Activated T-helper 2 cell treated with anti-CD3 and anti-CD28 coated beads, Interferon-gamma antibody, Interleukin-2, Interleukin-4, amounts not matched to agents 10 μg/mL and 5 μg/mL and 100 μg/mL, durations not matched to agents 14 hours and 24 hours and 36 hours (primary cell): ENCODE measurements at regions of chr3 and their contacts with region 1.

Region 1: GRCh38 chr3:33440323-33441232 is at the start of gene UBP1:
- DNase-seq: peak; percentile 99
- H3K4me3 Mint-ChIP-seq: peak within 1 kb of the TSS; percentile 100
- H3K27ac Mint-ChIP-seq: peak within 1 kb of the TSS; percentile 100
- H3K4me1 Mint-ChIP-seq: peaks cover 37% of the 10 kb centered on the region
- H3K27me3 Mint-ChIP-seq: no peaks in the 10 kb centered on the region
- total RNA-seq, gene UBP1: 59.2 and 63.8 TPM in 2 replicates

Region 2: GRCh38 chr3:32684800-32685542 is 755.6 kb before region 1 on chr3 and contains the start of gene CNOT10:
- intact Hi-C with region 1: loop called (anchors 1 kb)
- DNase-seq: peak; percentile 97
- H3K4me3 Mint-ChIP-seq: peak within 1 kb of the TSS; percentile 87
- H3K27ac Mint-ChIP-seq: peak within 1 kb of the TSS; percentile 90
- H3K4me1 Mint-ChIP-seq: peaks cover 27% of the 10 kb centered on the region
- H3K27me3 Mint-ChIP-seq: peaks cover 3% of the 10 kb centered on the region
- total RNA-seq, gene CNOT10: 51.5 and 53.5 TPM in 2 replicates

Region 3: DNA sequence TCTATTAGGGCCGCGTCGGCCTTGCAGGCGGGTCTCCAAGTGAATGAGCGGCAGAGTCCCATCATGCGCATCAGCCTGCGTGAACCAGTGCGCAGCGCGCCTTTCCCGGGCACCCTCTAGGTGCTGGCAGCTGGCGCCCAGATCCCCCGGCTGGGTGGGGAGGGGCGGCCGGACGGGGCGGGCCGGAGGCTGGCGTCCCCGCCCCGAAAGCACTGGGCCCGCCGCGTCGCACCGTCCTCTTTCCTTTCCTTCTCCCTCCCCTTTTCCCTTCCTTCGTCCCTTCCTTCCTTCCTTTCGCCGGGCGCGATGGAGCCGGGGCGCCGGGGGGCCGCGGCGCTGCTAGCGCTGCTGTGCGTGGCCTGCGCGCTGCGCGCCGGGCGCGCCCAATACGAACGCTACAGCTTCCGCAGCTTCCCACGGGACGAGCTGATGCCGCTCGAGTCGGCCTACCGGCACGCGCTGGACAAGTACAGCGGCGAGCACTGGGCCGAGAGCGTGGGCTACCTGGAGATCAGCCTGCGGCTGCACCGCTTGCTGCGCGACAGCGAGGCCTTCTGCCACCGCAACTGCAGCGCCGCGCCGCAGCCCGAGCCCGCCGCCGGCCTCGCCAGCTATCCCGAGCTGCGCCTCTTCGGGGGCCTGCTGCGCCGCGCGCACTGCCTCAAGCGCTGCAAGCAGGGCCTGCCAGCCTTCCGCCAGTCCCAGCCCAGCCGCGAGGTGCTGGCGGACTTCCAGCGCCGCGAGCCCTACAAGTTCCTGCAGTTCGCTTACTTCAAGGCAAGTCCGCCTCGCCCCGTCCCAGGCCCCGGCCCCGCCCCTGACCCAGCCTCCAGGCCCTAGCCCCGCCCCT is 326.6 kb before region 1 on chr3 and contains the start of gene CRTAP:
- intact Hi-C with region 1: loop called (anchors 1 kb)
- DNase-seq: peak; percentile 79
- H3K4me3 Mint-ChIP-seq: peak within 1 kb of the TSS; percentile 82
- H3K27ac Mint-ChIP-seq: peak within 1 kb of the TSS; percentile 68
- H3K4me1 Mint-ChIP-seq: peaks cover 17% of the 10 kb centered on the region
- H3K27me3 Mint-ChIP-seq: no peaks in the 10 kb centered on the region
- total RNA-seq, gene CRTAP: 51.9 and 55.9 TPM in 2 replicates

Region 4: DNA sequence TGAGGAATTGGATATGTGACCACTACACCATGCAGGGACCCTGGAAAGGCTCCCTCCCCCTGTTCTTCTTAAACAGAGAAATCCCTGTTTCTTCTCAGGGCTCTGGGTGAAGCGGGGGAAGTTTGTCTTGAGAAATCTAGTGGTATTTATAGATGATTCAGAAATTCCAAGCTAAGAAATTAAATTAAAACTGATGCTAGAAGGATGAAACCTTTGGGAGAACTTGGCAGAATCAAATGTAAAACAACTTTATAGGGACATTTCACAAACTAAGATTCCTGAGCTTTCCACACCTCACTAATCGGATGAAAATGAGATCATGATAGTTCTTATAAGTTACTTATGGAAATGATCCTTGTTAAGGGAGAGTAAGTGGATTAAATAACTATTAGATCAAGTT is 109.2 kb before region 1 on chr3:
- intact Hi-C with region 1: no loop called
- DNase-seq: no peak
- H3K4me3 Mint-ChIP-seq: no peak overlapping the region
- H3K27ac Mint-ChIP-seq: no peak overlapping the region
- H3K4me1 Mint-ChIP-seq: no peaks in the 10 kb centered on the region
- H3K27me3 Mint-ChIP-seq: peaks cover 6% of the 10 kb centered on the region

Region 5: DNA sequence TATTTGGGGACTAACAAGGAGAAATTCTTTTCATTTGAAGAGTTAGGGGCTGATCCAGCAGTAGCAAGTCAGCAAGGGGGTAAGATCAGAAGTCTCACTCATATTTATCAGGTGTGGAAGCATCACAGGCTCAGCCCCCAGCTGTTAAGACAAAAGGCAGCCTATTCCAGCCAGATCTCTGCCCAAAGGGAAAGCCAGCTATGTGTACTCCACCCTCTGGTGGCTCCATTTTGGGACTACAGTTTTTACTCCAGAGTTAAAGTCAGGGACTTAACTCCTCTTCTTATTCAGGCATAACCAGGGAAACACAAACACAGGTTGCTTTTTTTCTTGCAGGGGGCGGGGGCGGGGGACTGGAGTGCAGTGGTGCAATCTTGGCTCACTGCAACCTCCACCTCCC is 19.6 kb before region 1 on chr3:
- intact Hi-C with region 1: loop called (anchors 2 kb)
- DNase-seq: no peak
- H3K4me3 Mint-ChIP-seq: no peak overlapping the region
- H3K27ac Mint-ChIP-seq: no peak overlapping the region
- H3K4me1 Mint-ChIP-seq: peaks cover 14% of the 10 kb centered on the region
- H3K27me3 Mint-ChIP-seq: no peaks in the 10 kb centered on the region

Region 6: GRCh38 chr3:33798411-33799201 is 358.0 kb after region 1 on chr3 and contains the start of gene PDCD6IP:
- intact Hi-C with region 1: loop called (anchors 1 kb)
- DNase-seq: peak; percentile 87
- H3K4me3 Mint-ChIP-seq: peak within 1 kb of the TSS; percentile 97
- H3K27ac Mint-ChIP-seq: peak within 1 kb of the TSS; percentile 93
- H3K4me1 Mint-ChIP-seq: peaks cover 44% of the 10 kb centered on the region
- H3K27me3 Mint-ChIP-seq: peaks cover 6% of the 10 kb centered on the region
- total RNA-seq, gene PDCD6IP: 180 and 190 TPM in 2 replicates